ENCODE measurements at regions of chr7 and their contacts with region 1.

Region 1: DNA sequence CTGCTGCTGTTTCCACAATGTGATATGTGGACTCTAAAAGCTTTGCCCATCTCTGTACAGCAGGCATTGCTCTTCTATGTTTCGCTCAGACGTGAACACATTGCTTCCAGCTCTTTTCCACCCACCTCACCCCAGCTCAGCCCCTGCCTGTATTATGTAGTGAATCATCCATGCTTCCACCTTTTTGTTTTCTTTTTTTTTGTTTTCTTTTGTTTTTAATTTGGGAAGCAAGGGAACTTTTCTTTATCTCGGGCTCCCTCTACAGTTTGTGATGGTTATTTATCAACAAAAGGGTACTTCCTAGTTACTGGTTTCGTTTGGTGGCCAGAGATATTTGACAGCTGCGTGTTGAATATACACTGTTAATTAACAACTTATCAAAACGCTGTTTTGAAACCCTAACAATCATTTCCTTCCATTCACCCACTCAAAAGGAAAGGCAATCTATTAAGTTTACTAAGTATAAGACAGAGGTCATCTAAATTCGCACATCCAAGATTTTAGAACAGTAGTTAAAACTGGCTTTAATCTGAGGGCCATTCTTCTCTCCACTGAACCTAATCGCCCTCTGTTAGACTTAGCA is 127.9 kb upstream of the STK17A start:
- DNase-seq: no peak
- ATAC-seq: peak; percentile 67
- H3K4me3 Mint-ChIP-seq: no peak overlapping the region
- H3K27ac Mint-ChIP-seq: no peak overlapping the region
- H3K4me1 Mint-ChIP-seq: peaks cover 1% of the 10 kb centered on the region
- H3K27me3 Mint-ChIP-seq: peaks cover 10% of the 10 kb centered on the region

Region 2: GRCh38 chr7:43135129-43135528 is 319.9 kb before region 1 on chr7:
- CTCF ChIA-PET with region 1: no interaction called
- POLR2A ChIA-PET with region 1: no interaction called
- DNase-seq: no peak
- ATAC-seq: no peak
- H3K4me3 Mint-ChIP-seq: no peak overlapping the region
- H3K27ac Mint-ChIP-seq: no peak overlapping the region
- H3K4me1 Mint-ChIP-seq: no peaks in the 10 kb centered on the region
- H3K27me3 Mint-ChIP-seq: peaks cover 2% of the 10 kb centered on the region

Region 3: DNA sequence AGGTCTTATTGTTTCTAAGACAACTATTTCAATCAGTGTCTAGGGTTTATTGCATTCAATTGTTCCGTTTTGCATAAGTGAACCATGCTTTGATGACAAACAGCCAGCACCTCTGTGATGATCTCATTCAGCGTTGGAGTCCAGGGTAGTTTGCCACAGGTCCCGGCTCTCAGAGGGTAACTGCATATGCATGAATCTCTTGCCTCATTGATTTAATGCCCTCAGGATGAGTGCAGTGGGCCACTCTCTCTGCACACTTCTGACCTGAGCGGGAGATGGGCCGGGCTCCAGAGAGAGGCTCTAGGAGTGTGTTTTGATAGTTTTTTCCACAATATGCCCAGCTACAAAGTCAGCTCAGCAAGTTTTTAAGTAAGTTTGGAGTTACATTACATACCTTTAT is 258.6 kb before region 1 on chr7:
- CTCF ChIA-PET with region 1: no interaction called
- POLR2A ChIA-PET with region 1: no interaction called
- DNase-seq: no peak
- ATAC-seq: no peak
- H3K4me3 Mint-ChIP-seq: no peak overlapping the region
- H3K27ac Mint-ChIP-seq: no peak overlapping the region
- H3K4me1 Mint-ChIP-seq: no peaks in the 10 kb centered on the region
- H3K27me3 Mint-ChIP-seq: no peaks in the 10 kb centered on the region

Region 4: GRCh38 chr7:43220250-43220649 is 234.8 kb before region 1 on chr7:
- CTCF ChIA-PET with region 1: no interaction called
- POLR2A ChIA-PET with region 1: no interaction called
- DNase-seq: no peak
- ATAC-seq: no peak
- H3K4me3 Mint-ChIP-seq: no peak overlapping the region
- H3K27ac Mint-ChIP-seq: no peak overlapping the region
- H3K4me1 Mint-ChIP-seq: no peaks in the 10 kb centered on the region
- H3K27me3 Mint-ChIP-seq: peaks cover 4% of the 10 kb centered on the region

Region 5: DNA sequence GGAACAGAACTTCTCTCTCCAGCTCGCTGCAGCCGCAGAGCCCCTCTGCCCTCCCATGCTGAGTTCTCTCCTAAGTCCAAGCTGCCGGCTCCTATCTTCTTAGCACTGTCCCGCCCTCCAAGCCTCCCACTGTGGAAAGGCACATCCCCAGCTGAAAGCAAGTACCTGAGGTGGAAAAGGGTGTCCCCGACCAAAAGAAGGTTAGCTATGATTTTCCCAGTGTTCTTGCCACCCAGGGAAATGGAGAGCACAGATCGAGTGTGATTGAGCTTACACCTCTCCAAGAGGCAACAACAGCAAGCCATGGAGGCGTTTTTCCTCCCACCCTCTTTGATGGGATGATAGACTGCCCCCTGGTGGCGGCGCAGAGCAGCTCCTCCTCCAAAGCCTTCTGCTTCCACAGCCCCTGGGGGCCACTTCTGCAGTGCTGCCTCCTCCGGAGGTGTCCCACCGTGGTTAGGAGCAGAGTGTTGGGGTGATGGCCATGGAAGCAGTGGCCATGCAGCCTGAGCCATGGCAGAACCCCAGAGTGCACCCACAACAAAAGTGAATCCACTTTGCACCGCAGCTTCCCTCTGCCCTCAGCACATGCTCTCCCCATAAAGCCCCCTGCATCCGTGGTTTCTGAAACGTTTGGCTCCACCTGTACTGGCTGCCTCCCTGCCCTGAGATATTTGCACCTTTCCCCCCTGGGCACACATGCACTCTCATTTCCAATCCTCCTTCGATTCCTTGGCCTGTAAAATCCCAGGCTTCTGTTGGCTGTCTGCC is 15.2 kb before region 1 on chr7:
- CTCF ChIA-PET with region 1: interaction called, 22 read pairs
- POLR2A ChIA-PET with region 1: no interaction called
- DNase-seq: peak; percentile 68
- ATAC-seq: peak; percentile 81
- H3K4me3 Mint-ChIP-seq: no peak overlapping the region
- H3K27ac Mint-ChIP-seq: no peak overlapping the region
- H3K4me1 Mint-ChIP-seq: no peaks in the 10 kb centered on the region
- H3K27me3 Mint-ChIP-seq: peaks cover 9% of the 10 kb centered on the region

Region 6: DNA sequence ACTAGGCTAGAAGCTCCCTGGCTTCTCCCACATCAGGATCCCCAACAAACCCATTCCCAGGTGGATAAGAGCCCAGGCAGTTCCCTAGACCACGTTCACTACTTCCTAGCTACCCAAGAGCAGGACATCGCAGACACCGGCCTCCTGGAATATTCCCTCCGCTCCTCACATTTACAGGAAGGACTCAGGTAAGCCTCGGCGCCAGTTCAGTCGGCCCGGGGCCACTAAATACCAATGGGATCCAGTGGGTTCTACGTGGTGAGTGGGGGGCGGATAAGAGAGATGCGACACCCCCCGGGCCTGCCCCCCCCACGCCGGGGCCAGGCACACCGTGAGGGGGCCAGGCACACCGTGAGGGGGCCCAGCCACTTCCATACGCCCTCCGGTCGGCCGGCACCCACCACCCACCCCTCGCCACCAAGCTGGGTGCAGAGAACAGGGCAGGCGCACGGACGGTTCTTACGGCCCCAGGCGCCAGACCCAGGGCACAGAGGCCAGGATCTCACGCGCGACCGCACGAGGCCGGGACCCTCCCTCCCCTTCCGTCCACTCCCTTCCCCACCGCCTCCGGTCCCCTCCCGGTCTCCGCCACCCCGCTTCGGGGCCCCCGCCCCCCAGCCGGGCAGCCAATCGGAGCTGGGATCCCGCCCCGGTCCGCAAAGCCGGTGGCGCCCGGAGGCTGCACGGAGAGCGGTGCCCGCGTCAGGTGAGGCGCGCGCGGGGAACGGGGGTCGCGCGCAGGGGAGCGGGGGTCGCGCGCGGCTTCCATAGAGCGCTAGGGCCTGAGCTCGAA is 303.2 kb after region 1 on chr7 and contains the start of gene BLVRA:
- CTCF ChIA-PET with region 1: no interaction called
- POLR2A ChIA-PET with region 1: no interaction called
- DNase-seq: peak; percentile 66
- ATAC-seq: peak; percentile 89
- H3K4me3 Mint-ChIP-seq: peak within 1 kb of the TSS; percentile 75
- H3K27ac Mint-ChIP-seq: peak within 1 kb of the TSS; percentile 78
- H3K4me1 Mint-ChIP-seq: peaks cover 36% of the 10 kb centered on the region
- H3K27me3 Mint-ChIP-seq: peaks cover 4% of the 10 kb centered on the region
- total RNA-seq, gene BLVRA: 25.7 to 29.2 TPM